HCT116 (cell line): ENCODE measurements at regions of chr3 and their contacts with region 1.

Region 1: GRCh38 chr3:12135029-12135657 is 23.6 kb downstream of the TIMP4 start:
- DNase-seq: peak; percentile 34
- ATAC-seq: peak; percentile 96
- H3K4me3 ChIP-seq: no peak overlapping the region
- H3K27ac ChIP-seq: no peak overlapping the region
- H3K4me1 ChIP-seq: no peaks in the 10 kb centered on the region
- H3K27me3 ChIP-seq: no peaks in the 10 kb centered on the region
- CTCF ChIP-seq: peak; percentile 84 to 94 (median 90)
- POLR2A ChIP-seq: no peak
- RAD21 ChIP-seq: peak; percentile 96

Region 2: GRCh38 chr3:11846281-11847034 is 288.7 kb before region 1 on chr3 and contains the start of gene TAMM41:
- CTCF ChIA-PET with region 1: no interaction called
- POLR2A ChIA-PET with region 1: no interaction called
- RAD21 ChIA-PET with region 1: no interaction called
- intact Hi-C with region 1: no loop called
- DNase-seq: peak; percentile 81
- ATAC-seq: peak; percentile 98
- H3K4me3 ChIP-seq: peak within 1 kb of the TSS; percentile 94 to 99
- H3K27ac ChIP-seq: peak within 1 kb of the TSS; percentile 59
- H3K4me1 ChIP-seq: peaks cover 11 to 16% of the 10 kb centered on the region in 2 experiments; a peak in 3 of 4 replicates
- H3K27me3 ChIP-seq: no peaks in the 10 kb centered on the region
- CTCF ChIP-seq: peak; percentile 64 to 66 (median 66)
- POLR2A ChIP-seq: peak; percentile 85
- RAD21 ChIP-seq: 0 out of 2 replicates have a peak, but pooled peaks have one; percentile 18
- total RNA-seq, gene TAMM41: 17.9 TPM

Region 3: GRCh38 chr3:12287727-12288191 is 152.6 kb after region 1 on chr3:
- CTCF ChIA-PET with region 1: no interaction called
- POLR2A ChIA-PET with region 1: no interaction called
- RAD21 ChIA-PET with region 1: no interaction called
- intact Hi-C with region 1: loop called (anchors 2 kb)
- DNase-seq: no peak
- ATAC-seq: peak; percentile 64
- H3K4me3 ChIP-seq: peak overlapping the region; percentile 71 to 73
- H3K27ac ChIP-seq: peak overlapping the region; percentile 87
- H3K4me1 ChIP-seq: peaks cover 10 to 24% of the 10 kb centered on the region in 2 experiments; a peak in 3 of 4 replicates
- H3K27me3 ChIP-seq: no peaks in the 10 kb centered on the region
- CTCF ChIP-seq: no peak
- POLR2A ChIP-seq: no peak
- RAD21 ChIP-seq: peak; percentile 39; the same call in 1 of the 2 replicates